CD4-positive, alpha-beta memory T cell (primary cell): ENCODE measurements at regions of chr12 and their contacts with region 1.

Region 1: DNA sequence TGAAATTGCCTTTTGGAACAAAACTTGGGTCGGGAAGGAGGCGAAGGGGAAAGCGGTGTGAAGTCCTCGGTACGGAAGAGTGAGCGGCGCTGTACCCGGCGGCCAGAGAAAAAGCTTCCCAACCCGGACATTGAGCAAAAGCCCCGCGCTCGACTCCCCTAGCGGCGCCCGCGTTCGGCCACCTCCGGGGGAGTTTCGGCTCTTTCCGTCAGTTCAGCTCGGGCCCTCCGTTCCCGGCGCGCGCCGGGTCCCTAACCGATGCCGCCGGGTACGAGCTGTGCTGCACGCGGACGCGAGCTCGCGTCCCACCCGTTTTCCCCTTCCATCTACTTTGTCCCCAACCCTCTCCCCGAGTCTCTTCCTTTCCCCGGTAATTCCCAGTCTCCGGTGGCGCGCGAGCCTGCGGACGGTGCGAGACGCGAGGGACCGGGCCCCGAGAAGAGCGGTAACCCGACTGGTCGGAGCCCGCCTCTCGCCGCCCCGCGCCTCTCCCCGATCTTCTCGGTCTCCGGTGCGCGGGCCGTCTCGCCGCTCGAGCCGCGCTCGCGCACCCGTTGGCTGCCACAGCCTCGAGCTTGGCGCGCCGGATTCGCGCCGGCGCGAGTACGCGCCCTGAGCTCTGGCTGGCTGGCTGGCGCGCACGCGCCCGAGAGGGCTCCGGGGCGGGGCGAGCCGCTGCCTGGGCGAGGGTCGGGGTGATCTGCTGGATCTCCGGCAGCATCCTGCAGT is 446 bp upstream of the SPATS2 start:
- DNase-seq: peak; percentile 78 to 85 (median 83)
- H3K4me3 ChIP-seq: peak overlapping the region; percentile 55 to 88
- H3K4me3 Mint-ChIP-seq: peak overlapping the region; percentile 82 to 98 (median 96)
- H3K27ac ChIP-seq: peak overlapping the region; percentile 84
- H3K27ac Mint-ChIP-seq: peak overlapping the region; percentile 93 to 98 (median 96)
- H3K4me1 ChIP-seq: peaks cover 19% of the 10 kb centered on the region
- H3K4me1 Mint-ChIP-seq: peaks cover 17 to 37% (median 24%) of the 10 kb centered on the region in 4 donors
- H3K27me3 ChIP-seq: no peaks in the 10 kb centered on the region
- H3K27me3 Mint-ChIP-seq: peaks cover 0 to 1% of the 10 kb centered on the region in 2 donors

Region 2: DNA sequence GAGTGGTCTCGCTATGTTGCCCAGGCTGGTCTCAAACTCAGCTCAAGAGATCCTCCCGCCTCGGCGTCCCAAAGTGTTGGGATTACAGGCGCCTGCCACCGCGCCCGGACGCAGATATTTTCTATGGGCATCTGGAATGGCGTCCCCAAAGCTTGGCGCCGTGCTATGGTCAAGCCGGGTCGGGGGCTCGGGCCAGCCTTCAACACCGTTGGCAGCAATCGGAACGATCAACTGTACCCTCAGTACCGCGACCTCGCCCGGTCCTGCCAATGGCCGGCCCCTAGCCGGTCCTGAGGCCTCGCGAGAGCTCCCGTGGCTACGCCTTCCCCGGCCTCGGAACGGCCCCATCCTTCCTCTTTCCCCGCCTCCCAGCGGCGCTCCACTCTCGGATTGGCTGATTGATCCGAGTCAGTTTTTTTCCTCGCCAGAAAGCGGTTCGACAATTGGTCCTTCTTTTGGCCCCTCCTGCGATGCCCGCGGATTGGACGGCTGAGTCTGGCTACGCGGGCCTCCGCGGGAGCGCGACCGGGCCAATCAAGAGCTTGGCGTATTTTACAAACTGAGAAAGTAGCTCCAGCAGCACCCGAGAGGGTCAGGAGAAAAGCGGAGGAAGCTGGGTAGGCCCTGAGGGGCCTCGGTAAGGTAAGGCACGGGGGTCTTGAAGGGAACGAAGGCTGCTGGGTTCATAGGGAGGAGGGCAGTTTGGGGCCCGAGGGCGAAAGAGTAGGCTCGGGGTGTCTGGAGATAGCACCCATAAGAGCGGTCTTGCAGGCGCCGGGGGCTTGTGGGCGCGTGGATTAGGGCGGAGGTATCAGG is 43.9 kb before region 1 on chr12 and contains the start of gene TROAP:
- CTCF ChIA-PET with region 1: interaction called, 4 read pairs
- POLR2A ChIA-PET with region 1: interaction called, 14 read pairs
- intact Hi-C with region 1: loop called (anchors 1 kb)
- DNase-seq: peak; percentile 97 to 99 (median 97)
- H3K4me3 ChIP-seq: peak within 1 kb of the TSS; percentile 54 to 77
- H3K4me3 Mint-ChIP-seq: peak within 1 kb of the TSS; percentile 92 to 99 (median 96)
- H3K27ac ChIP-seq: peak within 1 kb of the TSS; percentile 51
- H3K27ac Mint-ChIP-seq: peak within 1 kb of the TSS; percentile 75 to 96 (median 91)
- H3K4me1 ChIP-seq: peaks cover 14% of the 10 kb centered on the region
- H3K4me1 Mint-ChIP-seq: peaks cover 14 to 24% (median 15%) of the 10 kb centered on the region in 4 donors
- H3K27me3 ChIP-seq: no peaks in the 10 kb centered on the region
- H3K27me3 Mint-ChIP-seq: no peaks in the 10 kb centered on the region
- total RNA-seq, gene TROAP: 0.26 to 0.80 TPM

Region 3: GRCh38 chr12:49347384-49348237 is 19.2 kb before region 1 on chr12:
- CTCF ChIA-PET with region 1: interaction called, 17 read pairs
- POLR2A ChIA-PET with region 1: interaction called, 15 read pairs
- intact Hi-C with region 1: no loop called
- DNase-seq: peak; percentile 70 to 81 (median 75)
- H3K4me3 ChIP-seq: peak overlapping the region; percentile 38 to 57
- H3K4me3 Mint-ChIP-seq: peak overlapping the region; percentile 81 to 92 (median 87)
- H3K27ac ChIP-seq: no peak overlapping the region
- H3K27ac Mint-ChIP-seq: peak overlapping the region in 2 of 7 donors; percentile 65 to 78
- H3K4me1 ChIP-seq: peaks cover 44% of the 10 kb centered on the region
- H3K4me1 Mint-ChIP-seq: peaks cover 15 to 44% (median 31%) of the 10 kb centered on the region in 4 donors
- H3K27me3 ChIP-seq: peaks cover 56% of the 10 kb centered on the region
- H3K27me3 Mint-ChIP-seq: peaks cover 25 to 46% of the 10 kb centered on the region in 2 donors

Region 4: DNA sequence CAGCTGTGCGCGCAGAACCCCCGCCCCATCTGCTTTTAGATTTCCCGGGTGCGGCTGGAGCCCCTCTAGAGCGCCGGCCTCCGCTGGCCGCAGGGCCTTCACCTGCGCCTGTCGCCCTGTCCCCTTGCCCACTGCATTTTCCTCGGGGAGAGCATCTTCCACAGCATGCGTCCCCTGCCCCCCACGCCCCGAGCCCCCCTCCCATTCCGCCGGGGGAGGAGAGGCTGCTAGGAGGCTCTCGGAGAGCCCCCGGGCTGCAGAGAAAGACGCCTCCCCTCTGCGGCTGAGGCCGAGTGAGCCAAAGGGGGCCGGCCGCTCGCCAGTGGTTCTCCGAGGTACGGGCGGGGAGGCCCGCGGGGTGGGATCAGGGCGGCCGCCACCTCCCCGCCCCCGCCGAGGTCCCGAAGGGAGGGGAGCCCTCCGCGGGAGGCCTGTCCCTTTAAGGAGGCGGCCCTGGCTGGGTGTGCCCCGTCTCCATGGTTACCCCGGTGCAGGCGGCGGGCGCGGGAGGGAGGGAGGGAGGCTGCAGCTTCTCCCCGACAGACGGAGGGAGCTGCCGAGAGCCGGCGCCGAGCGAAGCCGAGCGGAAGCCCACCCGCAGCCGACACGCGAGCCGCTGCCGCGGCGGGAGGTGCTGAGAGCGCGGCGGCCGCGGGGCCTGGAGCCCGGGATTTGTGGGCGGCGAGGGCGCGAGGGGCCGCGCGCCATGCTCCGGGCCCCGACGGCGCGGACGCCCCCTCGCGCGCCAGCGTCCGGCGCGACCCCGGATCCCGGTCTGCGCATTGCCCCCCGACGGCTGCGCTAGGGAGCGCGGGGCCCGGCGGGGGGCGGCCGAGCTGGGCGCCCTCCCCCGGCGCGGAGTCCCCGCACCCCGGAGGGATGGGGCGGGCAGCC is 171.9 kb after region 1 on chr12 and contains the start of gene KCNH3:
- CTCF ChIA-PET with region 1: no interaction called
- POLR2A ChIA-PET with region 1: interaction called, 4 read pairs
- intact Hi-C with region 1: loop called (anchors 1 kb)
- DNase-seq: peak; percentile 86 to 95 (median 88)
- H3K4me3 ChIP-seq: peak within 1 kb of the TSS; percentile 62 to 69
- H3K4me3 Mint-ChIP-seq: peak within 1 kb of the TSS; percentile 73 to 85 (median 79)
- H3K27ac ChIP-seq: no peak within 1 kb of the TSS
- H3K27ac Mint-ChIP-seq: peak within 1 kb of the TSS in 6 of 7 donors; percentile 46 to 70 (median 66)
- H3K4me1 ChIP-seq: peaks cover 21% of the 10 kb centered on the region
- H3K4me1 Mint-ChIP-seq: peaks cover 8 to 38% (median 19%) of the 10 kb centered on the region in 4 donors
- H3K27me3 ChIP-seq: no peaks in the 10 kb centered on the region
- H3K27me3 Mint-ChIP-seq: peaks cover 0 to 5% of the 10 kb centered on the region in 2 donors
- total RNA-seq, gene KCNH3: 1.3 to 2.4 TPM

Region 5: DNA sequence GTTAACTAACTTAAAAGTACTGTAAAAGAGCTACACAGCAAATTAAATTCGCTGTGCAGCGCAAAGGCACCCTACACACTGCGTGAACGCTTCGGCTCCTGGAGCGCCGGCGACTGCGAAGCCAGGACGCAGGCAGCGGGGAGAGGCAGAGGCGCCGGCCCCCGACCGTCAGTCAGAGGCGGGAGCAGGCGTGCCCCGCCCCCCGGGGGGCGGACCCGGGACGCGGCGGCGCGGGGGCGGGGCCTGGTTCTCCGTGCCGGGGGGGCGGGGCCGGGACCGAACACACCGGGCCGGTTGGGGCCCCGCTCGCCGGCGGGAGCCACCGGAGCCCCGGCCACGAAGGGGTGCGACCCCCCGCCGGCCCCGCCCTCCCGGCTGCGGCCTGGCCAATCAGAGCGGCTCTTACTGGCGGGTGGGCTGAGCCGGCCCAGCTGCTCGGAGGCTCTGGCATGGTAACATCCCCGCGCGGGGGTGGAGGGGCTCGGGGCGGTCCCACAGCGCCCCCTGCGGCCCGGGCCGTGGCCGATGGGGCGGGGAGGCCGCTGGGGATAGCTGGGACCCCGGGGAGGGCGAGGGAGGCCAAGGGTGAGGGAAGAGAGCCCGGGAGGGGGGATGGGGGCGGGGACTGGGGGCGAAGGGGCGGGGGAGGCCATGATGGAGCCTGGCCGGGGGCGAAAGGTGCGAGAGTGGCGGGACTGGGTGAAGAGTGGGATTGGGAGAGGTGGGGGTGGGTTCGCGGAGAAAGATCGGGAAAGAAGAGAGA is 256.5 kb after region 1 on chr12 and contains the start of gene PRPF40B:
- CTCF ChIA-PET with region 1: interaction called, 4 read pairs
- POLR2A ChIA-PET with region 1: interaction called, 11 read pairs
- intact Hi-C with region 1: loop called (anchors 2 kb)
- DNase-seq: peak; percentile 88 to 90 (median 89)
- H3K4me3 ChIP-seq: peak within 1 kb of the TSS; percentile 73 to 94
- H3K4me3 Mint-ChIP-seq: peak within 1 kb of the TSS; percentile 87 to 93 (median 90)
- H3K27ac ChIP-seq: peak within 1 kb of the TSS; percentile 65
- H3K27ac Mint-ChIP-seq: peak within 1 kb of the TSS; percentile 93 to 98 (median 94)
- H3K4me1 ChIP-seq: peaks cover 22% of the 10 kb centered on the region
- H3K4me1 Mint-ChIP-seq: peaks cover 15 to 42% (median 21%) of the 10 kb centered on the region in 4 donors
- H3K27me3 ChIP-seq: no peaks in the 10 kb centered on the region
- H3K27me3 Mint-ChIP-seq: no peaks in the 10 kb centered on the region
- total RNA-seq, gene PRPF40B: 15.1 to 15.9 TPM